ENCODE measurements at regions of chr4 and their contacts with region 1.

Region 1: DNA sequence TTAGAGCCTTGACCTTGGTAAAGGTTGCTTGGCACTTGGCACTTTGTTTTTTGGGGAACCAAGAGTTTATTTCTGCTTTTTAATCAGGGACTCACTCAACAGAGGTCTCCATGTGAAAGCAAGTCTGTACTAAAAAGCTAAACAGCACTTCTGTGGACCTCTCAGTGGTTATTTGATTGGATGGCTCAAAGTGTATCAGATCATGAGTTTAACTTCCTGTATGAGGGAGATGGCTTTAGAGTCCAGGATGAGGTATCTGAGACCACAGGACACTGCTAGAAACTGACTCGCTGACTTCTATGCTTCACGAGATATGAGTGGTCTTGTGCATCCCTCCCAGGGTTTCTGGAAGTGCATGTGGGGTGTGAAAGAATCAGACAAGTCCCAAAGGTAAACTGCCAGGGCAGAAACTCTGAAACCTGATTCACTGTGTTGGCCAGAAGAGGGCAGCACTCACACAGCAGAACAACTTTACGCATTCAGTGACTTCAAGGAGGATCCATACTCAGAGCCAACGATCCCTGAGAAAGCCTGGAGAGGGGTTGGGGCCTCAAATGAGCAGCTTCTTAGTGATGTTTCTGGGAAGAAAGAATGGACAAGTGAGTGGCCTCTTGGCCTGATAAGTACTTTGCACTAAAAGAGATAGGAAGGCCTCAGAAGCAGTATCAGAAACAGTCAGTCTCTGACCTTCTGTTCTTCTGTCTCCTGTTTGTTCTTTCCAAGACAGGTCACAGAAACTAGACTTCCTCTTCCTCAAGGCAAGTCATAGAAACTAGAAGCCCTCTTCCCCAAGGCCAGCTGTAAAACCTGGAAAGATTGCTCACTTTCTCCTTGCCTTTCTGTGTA is 220.3 kb upstream of the CXCL13 start:
- DNase-seq: peak; percentile 61
- ATAC-seq: peak; percentile 73
- H3K4me3 ChIP-seq: no peak overlapping the region
- H3K27ac ChIP-seq: no peak overlapping the region
- H3K4me1 ChIP-seq: no peaks in the 10 kb centered on the region
- H3K27me3 ChIP-seq: peaks cover 23% of the 10 kb centered on the region
- CTCF ChIP-seq: peak; percentile 70

Region 2: DNA sequence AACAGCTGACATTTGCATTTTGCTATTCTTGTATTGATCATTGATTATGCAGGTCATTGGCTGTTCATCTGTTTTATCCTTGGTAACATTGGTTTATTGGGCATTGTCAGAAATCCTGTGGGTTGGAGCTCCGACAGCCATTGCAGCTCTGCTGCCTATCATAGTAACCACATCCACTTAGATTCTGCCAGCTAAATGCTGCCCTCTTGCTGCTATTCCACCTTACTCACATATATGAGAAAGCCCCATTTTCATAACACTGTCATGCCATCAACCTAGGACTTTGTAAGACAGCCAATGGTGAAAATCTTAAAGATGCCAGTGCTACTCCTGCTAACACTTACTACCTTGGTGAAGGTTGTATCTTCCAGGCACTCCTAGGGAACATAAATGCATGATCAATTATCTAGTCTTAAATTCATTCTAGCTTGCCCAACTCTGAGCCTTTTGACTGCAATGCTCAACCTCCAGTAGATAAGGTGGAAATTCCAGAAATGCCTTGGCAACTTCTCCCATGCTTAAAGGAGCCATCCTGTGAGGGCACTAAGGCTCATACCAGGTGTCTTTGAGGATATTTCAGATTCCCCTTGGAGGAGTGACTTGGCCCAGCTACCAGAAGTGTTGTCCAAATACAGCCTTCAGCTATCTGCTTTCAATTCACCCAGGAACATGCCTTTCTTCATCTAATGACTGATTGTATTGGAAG is 33.1 kb after region 1 on chr4:
- CTCF ChIA-PET with region 1: no interaction called
- POLR2A ChIA-PET with region 1: no interaction called
- intact Hi-C with region 1: loop called (anchors 1 kb)
- DNase-seq: peak; percentile 41
- ATAC-seq: no peak
- H3K4me3 ChIP-seq: no peak overlapping the region
- H3K27ac ChIP-seq: no peak overlapping the region
- H3K4me1 ChIP-seq: no peaks in the 10 kb centered on the region
- H3K27me3 ChIP-seq: peaks cover 29% of the 10 kb centered on the region
- CTCF ChIP-seq: peak; percentile 51

Region 3: DNA sequence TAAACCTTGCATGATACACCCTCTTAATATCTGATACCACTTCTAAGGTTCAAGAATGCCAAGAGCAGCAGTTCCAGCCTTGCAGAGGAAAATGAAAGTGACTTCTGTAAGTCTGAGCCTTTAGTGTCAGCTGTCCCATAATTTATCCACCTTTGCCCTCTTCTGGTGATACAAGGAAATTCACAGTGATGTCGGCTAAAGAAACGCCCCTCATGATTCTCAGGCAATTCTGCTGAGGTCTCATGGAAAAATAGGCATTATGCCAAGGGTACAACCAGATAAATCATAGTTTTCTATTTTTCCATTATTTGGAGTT is 48.0 kb after region 1 on chr4:
- CTCF ChIA-PET with region 1: no interaction called
- POLR2A ChIA-PET with region 1: no interaction called
- intact Hi-C with region 1: loop called (anchors 1 kb)
- DNase-seq: peak; percentile 62
- ATAC-seq: peak; percentile 66
- H3K4me3 ChIP-seq: no peak overlapping the region
- H3K27ac ChIP-seq: no peak overlapping the region
- H3K4me1 ChIP-seq: no peaks in the 10 kb centered on the region
- H3K27me3 ChIP-seq: peaks cover 7% of the 10 kb centered on the region; the same call in 1 of the 2 replicates
- CTCF ChIP-seq: peak; percentile 56

Region 4: GRCh38 chr4:77600521-77601451 is 215.4 kb after region 1 on chr4:
- CTCF ChIA-PET with region 1: no interaction called
- POLR2A ChIA-PET with region 1: no interaction called
- intact Hi-C with region 1: loop called (anchors 1 kb)
- DNase-seq: peak; percentile 58
- ATAC-seq: peak; percentile 65
- H3K4me3 ChIP-seq: no peak overlapping the region
- H3K27ac ChIP-seq: no peak overlapping the region
- H3K4me1 ChIP-seq: no peaks in the 10 kb centered on the region
- H3K27me3 ChIP-seq: peaks cover 27% of the 10 kb centered on the region
- CTCF ChIP-seq: peak; percentile 84

Region 5: DNA sequence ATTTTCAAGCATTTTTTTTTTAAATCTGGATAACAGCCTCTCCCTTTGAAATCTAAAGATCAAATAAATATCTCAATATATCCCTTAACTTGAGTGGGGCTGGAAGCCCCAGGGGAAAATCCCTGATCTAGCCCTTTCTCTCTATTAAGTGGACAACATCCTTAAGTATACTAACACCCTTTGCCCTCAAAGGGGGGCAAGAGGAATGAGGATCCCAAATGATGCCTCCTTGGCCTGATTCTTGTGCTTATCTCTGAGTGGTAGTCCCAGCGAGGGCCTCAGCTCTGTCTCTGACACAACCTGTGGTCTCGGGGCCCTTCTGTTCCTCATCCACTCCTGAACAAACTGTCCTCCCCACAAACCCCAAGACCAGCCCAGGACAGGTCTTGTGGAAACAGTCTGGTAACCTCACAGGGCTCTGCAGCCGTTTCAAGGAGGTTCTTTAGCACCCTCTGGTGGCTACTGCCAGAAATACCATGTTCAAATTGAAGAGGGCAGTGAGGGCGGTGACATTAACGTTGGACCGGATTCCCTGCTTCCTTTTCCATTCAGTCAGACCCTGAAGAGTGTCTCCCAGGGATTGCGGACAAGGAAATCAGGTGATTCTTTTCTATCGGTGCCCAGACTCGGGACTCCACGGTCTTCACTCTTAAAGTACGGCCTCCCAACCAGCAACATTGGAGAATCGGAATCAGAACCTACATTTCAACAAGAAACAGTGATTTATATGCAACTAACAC is 233.2 kb after region 1 on chr4:
- CTCF ChIA-PET with region 1: no interaction called
- POLR2A ChIA-PET with region 1: no interaction called
- intact Hi-C with region 1: loop called (anchors 1 kb)
- DNase-seq: peak; percentile 83
- ATAC-seq: peak; percentile 95
- H3K4me3 ChIP-seq: no peak overlapping the region; the same call in 1 of the 2 replicates
- H3K27ac ChIP-seq: no peak overlapping the region
- H3K4me1 ChIP-seq: peaks cover 8% of the 10 kb centered on the region; the same call in 1 of the 2 replicates
- H3K27me3 ChIP-seq: no peaks in the 10 kb centered on the region; the same call in 1 of the 2 replicates
- CTCF ChIP-seq: peak; percentile 83

Region 6: GRCh38 chr4:77697860-77698590 is 312.7 kb after region 1 on chr4:
- CTCF ChIA-PET with region 1: no interaction called
- POLR2A ChIA-PET with region 1: no interaction called
- intact Hi-C with region 1: loop called (anchors 1 kb)
- DNase-seq: peak; percentile 72
- ATAC-seq: peak; percentile 68
- H3K4me3 ChIP-seq: no peak overlapping the region
- H3K27ac ChIP-seq: no peak overlapping the region
- H3K4me1 ChIP-seq: peaks cover 27% of the 10 kb centered on the region
- H3K27me3 ChIP-seq: no peaks in the 10 kb centered on the region
- CTCF ChIP-seq: peak; percentile 75

Measured in PC-3 (cell line).